Activated T-helper 1 cell treated with anti-CD3 and anti-CD28 coated beads, Interleukin-12 subunit alpha, Interleukin-12 subunit beta, Interleukin-2, Interleukin-4 antibody, amounts not matched to agents 30 ng/mL and 10 ng/mL and 1 ng/mL, durations not matched to agents 14 hours and 24 hours and 36 hours (primary cell): ENCODE measurements at regions of chr4 and their contacts with region 1.

Region 1: DNA sequence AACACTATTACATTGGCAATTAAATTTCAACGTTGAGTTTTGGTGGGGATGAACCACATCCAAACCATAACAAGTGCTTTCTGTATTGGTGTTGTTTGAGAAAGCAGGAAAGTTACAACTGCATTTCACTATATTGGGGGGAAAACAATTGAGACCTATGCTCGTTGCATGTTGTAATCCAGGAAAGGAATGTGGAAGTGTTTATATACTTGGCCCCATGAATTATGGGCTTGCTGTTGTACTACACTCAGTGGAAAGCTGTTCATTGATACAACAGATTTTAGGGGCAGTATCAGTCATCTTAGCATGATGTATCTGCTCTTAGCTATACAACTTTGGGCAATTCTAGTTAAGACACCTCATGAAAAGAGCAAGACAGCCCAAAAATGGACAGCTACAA is 52.4 kb downstream of the KLHL5 start:
- DNase-seq: no peak
- H3K4me3 Mint-ChIP-seq: no peak overlapping the region
- H3K27ac Mint-ChIP-seq: no peak overlapping the region
- H3K4me1 Mint-ChIP-seq: peaks cover 43% of the 10 kb centered on the region
- H3K27me3 Mint-ChIP-seq: no peaks in the 10 kb centered on the region

Region 2: DNA sequence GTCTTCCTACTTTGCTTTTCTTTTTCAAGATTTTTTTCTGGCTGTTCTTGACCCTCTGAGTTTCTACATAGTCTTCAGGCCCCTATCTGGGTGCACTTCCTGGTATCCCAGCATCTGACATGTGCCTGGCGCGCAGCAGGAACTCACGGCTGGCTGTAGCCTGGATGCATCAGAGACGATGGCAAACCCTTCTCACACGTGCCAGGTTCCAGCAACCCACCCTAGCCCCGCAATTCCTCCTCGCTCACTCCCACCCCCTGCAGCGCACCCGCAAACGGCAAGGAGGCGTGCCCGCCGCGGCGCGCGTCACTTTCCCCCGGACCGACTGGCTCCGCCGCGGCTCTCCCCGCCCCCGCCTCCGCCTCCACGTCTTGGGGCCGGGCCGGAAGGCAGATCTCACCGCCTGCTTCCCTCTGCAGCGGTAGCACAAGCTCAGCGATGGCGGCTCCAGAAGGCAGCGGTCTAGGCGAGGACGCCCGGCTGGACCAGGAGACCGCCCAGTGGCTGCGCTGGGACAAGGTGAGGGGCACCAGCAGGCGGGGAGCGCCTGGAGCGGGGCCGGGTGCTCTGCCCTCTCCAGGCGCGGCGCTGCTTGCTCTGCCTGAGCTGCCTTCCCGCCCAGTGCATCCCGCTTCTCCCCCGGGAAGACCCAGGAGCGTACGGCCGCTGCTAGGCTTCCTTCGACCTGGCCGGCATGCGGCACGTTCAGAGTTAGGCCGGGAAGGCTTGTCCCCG is 1288.0 kb before region 1 on chr4 and contains the start of gene PGM2:
- intact Hi-C with region 1: no loop called
- DNase-seq: peak; percentile 88
- H3K4me3 Mint-ChIP-seq: peak within 1 kb of the TSS; percentile 87
- H3K27ac Mint-ChIP-seq: peak within 1 kb of the TSS; percentile 86
- H3K4me1 Mint-ChIP-seq: peaks cover 40% of the 10 kb centered on the region
- H3K27me3 Mint-ChIP-seq: no peaks in the 10 kb centered on the region
- total RNA-seq, gene PGM2: 43.0 and 50.0 TPM in 2 replicates

Region 3: DNA sequence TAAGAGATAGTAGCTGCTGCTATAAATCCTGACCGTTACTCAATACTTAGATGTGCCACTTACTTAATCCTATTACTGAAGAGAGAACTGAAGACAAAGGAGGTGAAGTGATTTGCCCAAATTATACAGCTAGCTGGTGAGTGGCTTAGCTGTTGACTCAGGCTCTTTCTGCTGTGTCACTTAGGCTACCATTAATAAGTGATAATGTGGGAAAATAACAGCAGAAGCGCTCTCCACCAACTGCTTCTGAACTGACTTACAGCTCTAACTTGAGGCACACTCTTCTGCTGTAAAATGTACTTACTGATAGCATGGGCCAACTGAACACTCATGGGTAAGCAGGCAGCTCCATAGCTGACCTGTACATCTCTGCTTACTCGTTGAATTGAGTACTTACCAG is 59.9 kb before region 1 on chr4:
- intact Hi-C with region 1: loop called (anchors 5 kb)
- DNase-seq: no peak
- H3K4me3 Mint-ChIP-seq: no peak overlapping the region
- H3K27ac Mint-ChIP-seq: no peak overlapping the region
- H3K4me1 Mint-ChIP-seq: peaks cover 48% of the 10 kb centered on the region
- H3K27me3 Mint-ChIP-seq: no peaks in the 10 kb centered on the region